CD8-positive, alpha-beta T cell (primary cell): ENCODE measurements at regions of chr17 and their contacts with region 1.

Region 1: DNA sequence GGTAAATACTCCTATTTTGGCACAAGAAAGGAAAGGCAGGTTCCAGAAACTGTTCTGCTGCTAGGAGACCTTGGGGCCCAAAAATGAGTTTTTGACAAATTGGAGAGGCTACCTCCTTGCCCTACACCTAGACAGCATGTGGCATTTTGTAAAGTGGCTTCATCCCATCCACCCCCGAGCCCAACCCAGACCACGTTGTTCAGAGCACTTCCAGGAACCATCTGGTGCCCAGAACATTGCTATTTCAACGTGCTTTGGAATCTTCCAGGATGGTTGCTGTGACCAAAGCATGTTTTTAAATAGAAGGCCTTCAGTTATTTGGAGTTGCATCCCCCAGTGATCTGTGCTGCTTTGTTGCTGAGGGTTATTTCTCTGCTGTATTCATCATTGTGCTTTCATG is 116.3 kb upstream of the TOM1L1 start:
- DNase-seq: no peak
- ATAC-seq: no peak
- H3K4me3 ChIP-seq: no peak overlapping the region
- H3K4me3 Mint-ChIP-seq: no peak overlapping the region
- H3K27ac ChIP-seq: no peak overlapping the region
- H3K27ac Mint-ChIP-seq: no peak overlapping the region
- H3K4me1 ChIP-seq: no peaks in the 10 kb centered on the region
- H3K4me1 Mint-ChIP-seq: no peaks in the 10 kb centered on the region
- H3K27me3 ChIP-seq: no peaks in the 10 kb centered on the region
- H3K27me3 Mint-ChIP-seq: no peaks in the 10 kb centered on the region
- CTCF ChIP-seq: no peak

Region 2: DNA sequence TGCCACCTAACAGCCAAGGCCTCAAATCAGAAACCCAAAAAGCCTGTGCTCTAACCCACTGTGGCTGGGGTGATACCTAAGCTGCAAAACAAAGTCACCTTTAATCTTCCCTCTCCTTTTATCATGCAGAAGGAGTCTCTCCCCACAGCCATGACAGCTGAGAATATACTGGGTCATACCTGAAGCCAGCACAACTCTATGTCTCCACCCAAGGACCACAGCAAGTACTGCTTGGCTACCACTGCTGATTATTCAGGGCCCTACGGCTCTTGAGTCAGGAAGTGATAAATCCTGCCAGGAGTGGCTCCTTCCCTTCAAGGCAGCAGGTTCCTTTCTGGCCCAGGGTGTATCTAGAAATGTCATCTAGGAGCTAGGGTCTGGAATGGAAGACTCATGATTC is 35.1 kb before region 1 on chr17:
- CTCF ChIA-PET with region 1: no interaction called
- POLR2A ChIA-PET with region 1: no interaction called
- intact Hi-C with region 1: loop called in 1 of 2 experiments (anchors 5 kb)
- DNase-seq: no peak
- ATAC-seq: no peak
- H3K4me3 ChIP-seq: no peak overlapping the region
- H3K4me3 Mint-ChIP-seq: no peak overlapping the region
- H3K27ac ChIP-seq: no peak overlapping the region
- H3K27ac Mint-ChIP-seq: no peak overlapping the region
- H3K4me1 ChIP-seq: no peaks in the 10 kb centered on the region
- H3K4me1 Mint-ChIP-seq: no peaks in the 10 kb centered on the region
- H3K27me3 ChIP-seq: no peaks in the 10 kb centered on the region
- H3K27me3 Mint-ChIP-seq: no peaks in the 10 kb centered on the region
- CTCF ChIP-seq: no peak